IMR-90 (cell line): ENCODE measurements at regions of chr2 and their contacts with region 1.

Region 1: GRCh38 chr2:239840114-239840513 is 185.0 kb downstream of the NDUFA10 start:
- DNase-seq: no peak
- ATAC-seq: no peak
- H3K4me3 ChIP-seq: no peak overlapping the region
- H3K27ac ChIP-seq: no peak overlapping the region
- H3K4me1 ChIP-seq: no peaks in the 10 kb centered on the region
- H3K27me3 ChIP-seq: no peaks in the 10 kb centered on the region
- CTCF ChIP-seq: no peak
- POLR2A ChIP-seq: no peak
- RAD21 ChIP-seq: no peak

Region 2: DNA sequence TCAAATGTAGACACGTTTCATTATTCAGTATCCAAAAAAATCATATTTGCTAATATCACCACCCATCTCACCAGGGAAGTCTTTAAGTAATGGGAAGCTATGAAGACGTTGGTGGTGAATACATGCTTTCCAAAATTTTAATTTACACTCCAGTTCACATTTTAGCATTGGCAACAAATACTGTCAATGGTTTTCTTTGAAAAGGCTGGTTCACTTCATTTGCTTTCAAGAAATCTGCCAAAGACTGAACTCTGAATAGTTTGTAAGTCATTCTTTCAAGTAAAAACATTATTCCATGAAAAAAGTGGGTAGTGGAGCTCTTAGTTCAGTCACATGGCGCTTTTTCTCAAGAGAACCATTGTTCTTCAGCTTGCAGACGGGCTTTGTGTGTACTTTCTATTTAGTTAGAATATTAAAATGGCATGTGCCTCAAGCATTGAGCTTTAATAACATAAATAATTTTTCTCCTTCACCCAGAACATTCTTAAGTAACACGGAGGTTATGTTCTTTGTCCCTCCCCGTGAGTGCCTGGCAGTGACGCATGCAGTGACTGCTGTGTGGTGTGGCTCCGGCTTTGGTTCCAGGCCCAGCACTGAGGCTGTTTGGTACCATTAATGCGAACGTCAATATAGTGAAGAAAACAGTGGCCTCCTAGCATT is 139.3 kb before region 1 on chr2:
- CTCF ChIA-PET with region 1: no interaction called
- POLR2A ChIA-PET with region 1: no interaction called
- dilution Hi-C with region 1: no loop called
- in situ Hi-C with region 1: no loop called
- intact Hi-C with region 1: loop called (anchors 5 kb)
- DNase-seq: no peak
- ATAC-seq: no peak
- H3K4me3 ChIP-seq: no peak overlapping the region
- H3K27ac ChIP-seq: no peak overlapping the region
- H3K4me1 ChIP-seq: no peaks in the 10 kb centered on the region
- H3K27me3 ChIP-seq: no peaks in the 10 kb centered on the region
- CTCF ChIP-seq: no peak
- POLR2A ChIP-seq: no peak
- RAD21 ChIP-seq: no peak

Region 3: DNA sequence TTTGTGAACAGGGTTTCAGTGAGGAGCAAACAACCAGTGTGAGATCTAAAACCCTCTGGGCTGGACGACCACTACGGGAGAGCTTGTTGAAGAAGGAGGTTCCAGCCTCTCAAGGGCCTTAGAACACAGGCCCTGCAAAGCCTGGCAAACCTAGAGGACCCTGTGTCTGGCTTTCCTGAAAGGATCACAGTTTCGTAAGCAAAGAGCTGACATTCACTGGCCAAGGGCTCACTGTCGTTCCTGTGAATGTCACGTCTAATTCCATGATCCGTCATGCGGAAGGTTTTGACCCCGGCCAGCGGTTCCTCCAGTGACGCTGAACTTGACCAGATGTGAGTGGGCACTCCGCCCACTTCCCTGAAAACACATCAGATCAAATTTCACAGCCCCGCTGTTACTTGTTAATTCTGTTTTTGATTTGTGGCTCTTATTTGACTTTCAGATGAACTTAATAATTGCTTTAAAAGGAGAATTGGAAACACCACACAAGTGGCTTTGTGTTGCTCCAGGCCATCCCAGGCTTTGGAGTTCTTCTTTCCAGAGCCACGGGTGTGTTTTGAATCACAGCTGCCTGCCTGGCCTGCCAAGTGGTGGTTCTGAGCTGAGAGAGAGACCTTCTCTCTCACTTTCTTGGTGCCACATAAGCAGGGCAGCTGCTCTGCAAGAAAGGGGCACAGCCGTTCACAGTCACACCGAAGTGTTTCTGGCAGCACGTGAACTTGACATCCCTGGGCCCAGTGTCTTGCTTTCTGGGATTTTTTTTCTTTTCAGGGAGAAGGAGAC is 123.4 kb before region 1 on chr2:
- CTCF ChIA-PET with region 1: no interaction called
- POLR2A ChIA-PET with region 1: no interaction called
- dilution Hi-C with region 1: no loop called
- in situ Hi-C with region 1: no loop called
- intact Hi-C with region 1: no loop called
- DNase-seq: no peak
- ATAC-seq: no peak
- H3K4me3 ChIP-seq: no peak overlapping the region
- H3K27ac ChIP-seq: no peak overlapping the region
- H3K4me1 ChIP-seq: no peaks in the 10 kb centered on the region
- H3K27me3 ChIP-seq: no peaks in the 10 kb centered on the region
- CTCF ChIP-seq: no peak
- POLR2A ChIP-seq: no peak
- RAD21 ChIP-seq: no peak